ENCODE measurements at regions of chr17 and their contacts with region 1.

Region 1: DNA sequence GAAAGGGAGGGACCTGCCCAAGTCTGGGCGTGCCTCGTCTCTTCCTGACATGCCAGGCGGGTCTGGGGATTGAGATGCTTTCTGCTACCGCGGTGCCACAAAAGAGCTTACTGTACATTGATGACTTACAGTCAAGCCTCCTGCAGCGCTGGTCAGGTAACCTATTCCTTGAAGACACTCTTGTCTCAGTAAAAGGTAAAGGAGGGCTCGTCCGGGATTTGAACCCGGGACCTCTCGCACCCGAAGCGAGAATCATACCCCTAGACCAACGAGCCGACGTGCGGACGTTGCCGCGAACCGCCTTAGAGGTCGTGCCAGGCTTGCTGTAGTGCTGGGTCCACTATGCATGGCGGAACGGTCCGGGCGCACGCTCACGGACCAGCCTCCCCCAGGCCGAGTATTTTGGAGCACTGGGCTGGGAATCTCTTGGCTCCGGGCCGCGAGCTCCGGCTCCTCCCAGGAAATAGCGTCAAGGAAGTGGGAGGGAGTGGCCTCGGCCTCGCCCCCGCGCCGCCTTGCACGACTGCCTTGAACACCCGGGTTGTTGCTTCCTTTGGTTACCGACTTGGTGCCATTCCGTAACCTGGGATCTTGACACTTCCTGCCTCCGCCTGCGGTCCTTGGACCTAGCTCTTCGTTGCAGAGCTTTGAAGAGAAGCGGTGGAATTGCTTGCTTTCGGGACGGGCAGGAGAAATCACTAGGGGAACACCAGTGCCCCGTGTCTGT is 12.4 kb upstream of the AURKB start:
- DNase-seq: peak; percentile 82 to 87
- H3K4me3 ChIP-seq: peak overlapping the region; percentile 66
- H3K4me3 Mint-ChIP-seq: peak overlapping the region; percentile 90
- H3K27ac Mint-ChIP-seq: peak overlapping the region; percentile 96
- H3K4me1 ChIP-seq: no peaks in the 10 kb centered on the region
- H3K4me1 Mint-ChIP-seq: peaks cover 22% of the 10 kb centered on the region
- H3K27me3 ChIP-seq: no peaks in the 10 kb centered on the region
- H3K27me3 Mint-ChIP-seq: peaks cover 2% of the 10 kb centered on the region
- CTCF ChIP-seq: no peak

Region 2: DNA sequence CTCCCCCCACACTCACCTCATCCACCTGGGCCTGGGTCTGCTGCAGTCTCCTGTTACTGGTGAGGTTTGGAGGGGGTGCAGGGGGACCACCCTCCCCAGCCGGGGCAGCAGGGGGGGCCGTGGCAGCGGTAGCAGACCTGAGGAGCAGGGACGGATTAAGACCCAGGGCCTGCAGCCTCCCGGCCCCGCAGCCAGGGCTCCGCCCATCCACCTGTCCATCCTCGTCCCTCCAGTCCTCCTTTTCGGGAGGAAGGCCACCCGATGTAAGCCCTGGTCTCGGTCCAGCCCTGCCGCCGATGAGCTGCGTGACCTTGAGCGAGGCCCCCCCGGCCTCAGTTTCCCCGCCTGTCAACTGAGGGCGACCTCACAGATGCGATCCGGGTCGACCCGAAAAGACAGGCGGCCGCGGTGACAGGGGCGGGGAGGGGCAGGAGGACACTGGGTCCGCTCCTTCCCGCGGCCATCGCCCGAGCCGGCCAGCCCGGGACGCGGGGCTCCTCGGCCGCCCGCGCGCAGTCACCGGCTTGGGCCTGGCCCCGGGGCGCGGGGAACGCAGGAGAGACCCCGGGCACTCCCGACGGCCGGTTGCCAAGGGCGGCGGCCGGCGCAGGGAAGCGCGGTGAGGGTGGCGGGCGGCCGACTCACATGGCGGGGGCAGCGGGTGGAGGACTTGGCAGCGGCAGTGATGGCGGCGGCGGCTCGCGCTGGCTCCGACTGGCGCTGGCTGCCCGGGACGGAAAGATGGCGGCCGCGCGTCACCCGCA is 60.4 kb before region 1 on chr17 and contains the start of gene VAMP2:
- CTCF ChIA-PET with region 1: no interaction called
- POLR2A ChIA-PET with region 1: no interaction called
- intact Hi-C with region 1: no loop called
- DNase-seq: peak in 1 of 2 experiments; percentile 74
- H3K4me3 ChIP-seq: peak within 1 kb of the TSS; percentile 81
- H3K4me3 Mint-ChIP-seq: peak within 1 kb of the TSS; percentile 83
- H3K27ac Mint-ChIP-seq: peak within 1 kb of the TSS; percentile 93
- H3K4me1 ChIP-seq: peaks cover 9% of the 10 kb centered on the region; the same call in 1 of the 2 replicates
- H3K4me1 Mint-ChIP-seq: peaks cover 5% of the 10 kb centered on the region
- H3K27me3 ChIP-seq: no peaks in the 10 kb centered on the region
- H3K27me3 Mint-ChIP-seq: no peaks in the 10 kb centered on the region
- CTCF ChIP-seq: no peak
- total RNA-seq, gene VAMP2: 10.5 and 12.2 TPM in 2 replicates

Region 3: GRCh38 chr17:8189711-8190477 is 32.9 kb before region 1 on chr17 and contains the start of gene BORCS6:
- CTCF ChIA-PET with region 1: interaction called, 4 read pairs
- POLR2A ChIA-PET with region 1: interaction called, 6 read pairs
- intact Hi-C with region 1: loop called (anchors 1 kb)
- DNase-seq: peak; percentile 89 to 95
- H3K4me3 ChIP-seq: peak within 1 kb of the TSS; percentile 66
- H3K4me3 Mint-ChIP-seq: no peak within 1 kb of the TSS
- H3K27ac Mint-ChIP-seq: peak within 1 kb of the TSS; percentile 63
- H3K4me1 ChIP-seq: peaks cover 13% of the 10 kb centered on the region
- H3K4me1 Mint-ChIP-seq: no peaks in the 10 kb centered on the region
- H3K27me3 ChIP-seq: no peaks in the 10 kb centered on the region
- H3K27me3 Mint-ChIP-seq: no peaks in the 10 kb centered on the region
- CTCF ChIP-seq: no peak
- total RNA-seq, gene BORCS6: 4.2 and 4.7 TPM in 2 replicates

Region 4: DNA sequence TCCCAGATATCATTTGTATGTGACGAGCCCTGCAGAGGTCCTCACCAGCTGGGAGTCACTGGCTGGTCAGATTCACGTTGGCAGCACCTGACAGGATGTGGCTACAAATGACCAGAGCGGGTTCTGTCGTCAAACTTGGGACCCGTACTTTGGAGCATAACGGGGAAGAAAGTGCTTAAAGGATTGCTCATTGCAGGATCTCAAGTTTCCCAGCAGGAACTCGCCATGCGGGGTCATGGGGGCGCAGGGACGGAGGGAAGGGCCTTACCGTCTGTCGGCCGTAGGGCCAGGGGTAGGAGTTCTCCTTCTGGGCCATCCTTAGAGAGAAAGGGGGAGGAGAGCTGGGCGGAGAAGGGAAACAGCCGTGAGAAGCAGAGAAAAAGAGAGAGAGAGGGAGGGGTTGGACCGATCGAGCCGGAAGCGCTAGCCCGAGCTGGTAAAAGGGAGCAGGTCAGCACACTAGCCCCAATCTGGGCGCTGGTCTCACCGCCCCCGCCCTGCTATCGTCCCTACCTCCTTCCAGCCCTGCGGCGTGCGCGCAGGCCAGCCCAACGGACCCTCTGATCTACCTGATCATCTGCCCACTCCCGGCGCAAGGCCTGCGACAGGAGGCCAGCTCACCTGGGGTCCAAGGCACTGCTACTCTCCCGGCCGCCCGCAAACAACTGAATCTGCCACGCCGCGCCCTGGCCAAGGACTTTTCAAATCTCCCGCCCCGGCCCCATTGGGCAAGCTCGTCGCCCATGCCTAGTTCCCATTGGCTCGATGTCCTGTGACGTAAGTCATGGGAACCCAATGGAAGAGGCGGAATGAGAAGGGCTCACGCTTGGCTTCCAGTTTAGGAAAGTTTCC is 12.7 kb before region 1 on chr17 and contains the start of gene AURKB:
- CTCF ChIA-PET with region 1: interaction called, 4 read pairs
- POLR2A ChIA-PET with region 1: interaction called, 24 read pairs
- intact Hi-C with region 1: loop called (anchors 1 kb)
- DNase-seq: peak; percentile 90 to 92
- H3K4me3 ChIP-seq: peak within 1 kb of the TSS; percentile 84
- H3K4me3 Mint-ChIP-seq: peak within 1 kb of the TSS; percentile 100
- H3K27ac Mint-ChIP-seq: peak within 1 kb of the TSS; percentile 99
- H3K4me1 ChIP-seq: peaks cover 4% of the 10 kb centered on the region; the same call in 1 of the 2 replicates
- H3K4me1 Mint-ChIP-seq: peaks cover 8% of the 10 kb centered on the region
- H3K27me3 ChIP-seq: no peaks in the 10 kb centered on the region
- H3K27me3 Mint-ChIP-seq: no peaks in the 10 kb centered on the region
- CTCF ChIP-seq: no peak
- total RNA-seq, gene AURKB: 82.8 and 89.4 TPM in 2 replicates

Region 5: DNA sequence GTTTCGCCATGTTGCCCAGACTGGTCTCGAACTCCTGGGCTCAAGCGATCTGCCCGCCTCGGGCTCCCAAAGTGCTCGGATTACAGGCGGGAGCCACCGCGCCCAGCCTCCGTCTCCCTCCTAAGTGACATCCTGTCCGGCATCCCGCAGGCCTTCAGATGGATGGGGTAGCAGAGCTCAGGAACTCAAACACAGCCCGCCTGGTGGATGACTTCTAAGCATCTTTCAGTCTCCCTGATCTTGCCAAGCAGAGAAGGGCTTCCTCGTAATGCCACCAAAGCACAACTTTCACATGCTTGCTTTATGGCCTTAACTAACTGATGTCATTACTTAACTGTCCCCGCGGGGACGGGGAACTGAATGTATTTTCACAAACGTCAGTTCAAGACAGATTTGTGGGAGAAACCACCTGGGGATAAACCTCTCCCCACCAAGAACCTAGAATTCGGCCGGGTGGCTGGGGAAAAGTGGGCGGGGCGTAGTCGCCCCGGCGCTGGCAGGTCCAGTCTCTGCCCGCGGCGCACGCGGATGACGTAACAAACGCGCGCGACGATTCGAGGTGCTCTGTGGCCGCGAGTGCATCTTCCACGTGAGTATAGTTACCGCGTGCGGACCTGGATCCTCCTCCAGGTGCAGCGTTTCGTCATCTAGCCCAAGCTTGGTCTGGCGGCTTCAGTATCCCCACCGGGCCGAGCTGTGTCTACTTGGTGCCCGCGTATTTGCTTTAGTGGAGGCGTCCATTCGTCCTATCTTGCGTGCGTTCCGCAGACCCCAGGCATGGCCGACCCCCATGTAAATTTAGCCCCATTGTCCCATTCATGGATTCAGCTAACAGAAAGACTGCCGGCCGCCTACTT is 26.2 kb after region 1 on chr17 and contains the start of gene PFAS:
- CTCF ChIA-PET with region 1: no interaction called
- POLR2A ChIA-PET with region 1: interaction called, 3 read pairs
- intact Hi-C with region 1: loop called (anchors 1 kb)
- DNase-seq: peak; percentile 91 to 93
- H3K4me3 ChIP-seq: peak within 1 kb of the TSS; percentile 61
- H3K4me3 Mint-ChIP-seq: peak within 1 kb of the TSS; percentile 98
- H3K27ac Mint-ChIP-seq: peak within 1 kb of the TSS; percentile 96
- H3K4me1 ChIP-seq: no peaks in the 10 kb centered on the region
- H3K4me1 Mint-ChIP-seq: peaks cover 9% of the 10 kb centered on the region
- H3K27me3 ChIP-seq: no peaks in the 10 kb centered on the region
- H3K27me3 Mint-ChIP-seq: no peaks in the 10 kb centered on the region
- CTCF ChIP-seq: no peak
- total RNA-seq, gene PFAS: 38.8 and 44.1 TPM in 2 replicates

Region 6: DNA sequence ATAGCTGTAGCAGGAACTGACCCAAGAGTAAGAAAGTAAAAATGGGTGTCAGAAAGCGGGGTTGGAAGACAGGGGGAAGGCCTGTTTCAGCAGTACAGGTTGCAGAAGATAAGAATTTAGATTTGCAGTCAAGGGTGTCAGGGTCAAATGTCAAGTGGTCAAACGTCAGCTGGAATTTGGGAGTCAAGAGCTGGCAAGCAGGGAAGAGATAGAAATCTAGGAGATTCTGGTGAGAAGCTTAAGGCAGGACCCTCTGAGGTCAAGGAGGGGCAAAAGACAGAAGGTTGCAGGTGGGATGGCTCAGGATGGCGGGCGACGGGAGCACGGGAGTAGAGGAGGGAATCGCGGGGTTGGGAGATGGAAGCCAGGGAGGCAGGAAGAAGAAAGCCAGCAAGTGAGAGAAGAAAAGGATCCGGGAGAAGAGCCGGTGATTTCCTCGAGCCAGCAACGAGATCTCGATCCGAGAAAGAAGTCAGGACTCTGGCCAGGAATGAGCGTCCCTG is 72.1 kb after region 1 on chr17:
- CTCF ChIA-PET with region 1: no interaction called
- POLR2A ChIA-PET with region 1: interaction called, 10 read pairs
- intact Hi-C with region 1: loop called (anchors 1 kb)
- DNase-seq: no peak
- H3K4me3 ChIP-seq: peak overlapping the region; percentile 39
- H3K4me3 Mint-ChIP-seq: peak overlapping the region; percentile 86
- H3K27ac Mint-ChIP-seq: peak overlapping the region; percentile 93
- H3K4me1 ChIP-seq: peaks cover 5% of the 10 kb centered on the region; the same call in 1 of the 2 replicates
- H3K4me1 Mint-ChIP-seq: peaks cover 7% of the 10 kb centered on the region
- H3K27me3 ChIP-seq: no peaks in the 10 kb centered on the region
- H3K27me3 Mint-ChIP-seq: no peaks in the 10 kb centered on the region
- CTCF ChIP-seq: no peak

Region 7: GRCh38 chr17:8300627-8301242 is 77.9 kb after region 1 on chr17:
- CTCF ChIA-PET with region 1: no interaction called
- POLR2A ChIA-PET with region 1: interaction called, 10 read pairs
- intact Hi-C with region 1: loop called (anchors 1 kb)
- DNase-seq: peak; percentile 45 to 48
- H3K4me3 ChIP-seq: no peak overlapping the region
- H3K4me3 Mint-ChIP-seq: no peak overlapping the region
- H3K27ac Mint-ChIP-seq: no peak overlapping the region
- H3K4me1 ChIP-seq: no peaks in the 10 kb centered on the region
- H3K4me1 Mint-ChIP-seq: no peaks in the 10 kb centered on the region
- H3K27me3 ChIP-seq: no peaks in the 10 kb centered on the region
- H3K27me3 Mint-ChIP-seq: no peaks in the 10 kb centered on the region
- CTCF ChIP-seq: peak; percentile 54 to 67